ENCODE measurements at regions of chr17 and their contacts with region 1.

Region 1: GRCh38 chr17:44911133-44912001 is 3.9 kb downstream of the GFAP start:
- DNase-seq: peak; percentile 69 to 84 (median 76)
- ATAC-seq: peak; percentile 91
- H3K4me3 ChIP-seq: no peak overlapping the region
- H3K27ac ChIP-seq: no peak overlapping the region
- H3K4me1 ChIP-seq: peaks cover 27 to 37% of the 10 kb centered on the region in 2 experiments
- H3K27me3 ChIP-seq: peaks cover 0 to 11% of the 10 kb centered on the region in 2 experiments; a peak in 1 of 5 replicates
- CTCF ChIP-seq: peak; percentile 77 to 82 (median 80)
- EP300 ChIP-seq: no peak
- POLR2A ChIP-seq: no peak
- RAD21 ChIP-seq: peak in 1 of 2 experiments; percentile 49; a peak in 2 of 4 replicates

Region 2: DNA sequence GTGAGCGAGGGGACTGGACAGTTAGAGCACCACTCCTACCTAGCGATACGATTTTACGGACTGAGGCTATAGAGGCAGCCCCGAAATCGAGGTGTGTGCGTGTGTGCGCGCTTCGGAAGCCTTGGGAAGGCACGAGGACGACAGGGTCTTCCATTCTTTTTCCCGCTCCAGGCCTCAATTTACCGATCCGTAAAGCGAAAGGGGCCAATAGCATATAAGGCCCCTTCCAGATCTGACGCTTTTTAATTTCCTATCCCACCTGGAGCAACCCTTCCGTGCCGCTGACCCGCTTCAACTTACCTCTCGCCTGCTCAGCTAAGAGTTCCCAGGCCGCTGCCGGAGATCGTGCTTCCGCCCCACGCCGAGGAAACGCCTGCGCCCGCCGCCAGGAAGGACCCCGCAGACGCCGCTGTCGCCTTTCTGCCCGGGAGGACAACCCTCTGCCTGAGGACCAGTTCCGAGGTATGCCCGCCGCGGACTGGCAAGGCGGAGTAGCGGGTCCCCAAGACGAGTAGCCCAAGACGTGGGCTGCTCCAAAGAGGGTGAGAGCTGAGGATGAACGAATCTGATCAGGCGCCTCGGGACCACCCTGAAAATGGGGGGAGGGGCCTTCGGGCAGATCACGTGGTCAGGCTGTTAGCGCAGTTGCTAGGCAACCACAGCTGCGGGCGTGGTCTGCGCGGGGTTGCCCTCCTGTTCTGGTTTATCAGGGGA is 12.1 kb before region 1 on chr17 and contains the start of gene EFTUD2:
- CTCF ChIA-PET with region 1: no interaction called
- POLR2A ChIA-PET with region 1: interaction called, 28 read pairs
- in situ Hi-C with region 1: no loop called
- intact Hi-C with region 1: no loop called
- DNase-seq: peak; percentile 92 to 96 (median 94)
- ATAC-seq: peak; percentile 90
- H3K4me3 ChIP-seq: peak within 1 kb of the TSS; percentile 72
- H3K27ac ChIP-seq: peak within 1 kb of the TSS; percentile 99
- H3K4me1 ChIP-seq: peaks cover 7 to 10% of the 10 kb centered on the region in 2 experiments; a peak in 3 of 5 replicates
- H3K27me3 ChIP-seq: no peaks in the 10 kb centered on the region
- CTCF ChIP-seq: no peak
- EP300 ChIP-seq: peak; percentile 55; the same call in 1 of the 2 replicates
- POLR2A ChIP-seq: peak; percentile 92
- RAD21 ChIP-seq: 0 out of 4 replicates have a peak, but pooled peaks of 1 of the 2 experiments have one; percentile 5
- polyA plus RNA-seq, gene EFTUD2: 65.8 to 116 TPM

Region 3: DNA sequence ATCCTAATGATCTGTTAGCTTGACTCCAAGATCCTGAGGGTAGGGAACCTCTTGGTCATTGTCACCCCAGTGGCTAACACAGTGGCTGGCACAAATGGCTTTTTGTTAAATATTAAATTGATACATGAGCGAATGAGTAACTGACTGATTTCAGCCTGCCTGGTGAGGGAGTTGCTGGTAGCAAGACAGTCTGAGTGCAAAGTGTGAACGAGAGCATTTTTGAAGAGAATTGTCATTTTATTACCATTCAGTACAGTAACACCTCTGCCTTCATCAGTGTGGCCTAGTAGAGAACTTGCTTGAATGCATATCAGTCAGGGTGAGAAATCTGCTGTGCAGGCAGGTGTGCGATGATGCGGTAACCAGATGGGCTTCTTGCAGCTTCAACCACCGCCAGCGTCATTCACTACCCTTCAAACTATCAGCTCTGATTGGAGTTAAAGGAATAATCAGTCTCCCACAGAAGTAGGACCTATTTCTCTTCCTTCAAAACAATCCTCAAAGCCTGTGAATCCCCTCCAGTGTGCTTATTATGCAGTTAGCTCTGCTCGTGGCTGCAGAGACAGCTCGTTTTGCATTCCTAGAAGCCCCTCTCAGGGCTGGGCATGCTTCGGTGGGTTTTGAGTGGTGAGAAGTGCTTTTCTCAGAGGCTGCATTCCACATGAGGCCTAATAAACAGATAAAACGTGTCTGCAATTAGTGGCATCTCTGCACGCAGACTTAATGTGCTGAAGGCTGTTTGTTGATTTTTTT is 279.3 kb after region 1 on chr17:
- CTCF ChIA-PET with region 1: no interaction called
- POLR2A ChIA-PET with region 1: no interaction called
- in situ Hi-C with region 1: no loop called
- intact Hi-C with region 1: no loop called
- DNase-seq: peak in 1 of 4 experiments; percentile 3
- ATAC-seq: no peak
- H3K4me3 ChIP-seq: no peak overlapping the region
- H3K27ac ChIP-seq: no peak overlapping the region
- H3K4me1 ChIP-seq: no peaks in the 10 kb centered on the region
- H3K27me3 ChIP-seq: no peaks in the 10 kb centered on the region; a peak in 2 of 5 replicates
- CTCF ChIP-seq: no peak
- EP300 ChIP-seq: no peak
- POLR2A ChIP-seq: no peak
- RAD21 ChIP-seq: no peak

Measured in K562 (cell line).